K562 (cell line): ENCODE measurements at regions of chr9 and their contacts with region 1.

Region 1: GRCh38 chr9:92276331-92277032 is 17.0 kb downstream of the IARS1 start:
- DNase-seq: no peak
- ATAC-seq: no peak
- H3K4me3 ChIP-seq: no peak overlapping the region
- H3K27ac ChIP-seq: no peak overlapping the region
- H3K4me1 ChIP-seq: no peaks in the 10 kb centered on the region
- H3K27me3 ChIP-seq: no peaks in the 10 kb centered on the region
- CTCF ChIP-seq: no peak
- EP300 ChIP-seq: no peak
- POLR2A ChIP-seq: 0 out of 2 replicates have a peak, but pooled peaks have one; percentile 28
- RAD21 ChIP-seq: no peak

Region 2: DNA sequence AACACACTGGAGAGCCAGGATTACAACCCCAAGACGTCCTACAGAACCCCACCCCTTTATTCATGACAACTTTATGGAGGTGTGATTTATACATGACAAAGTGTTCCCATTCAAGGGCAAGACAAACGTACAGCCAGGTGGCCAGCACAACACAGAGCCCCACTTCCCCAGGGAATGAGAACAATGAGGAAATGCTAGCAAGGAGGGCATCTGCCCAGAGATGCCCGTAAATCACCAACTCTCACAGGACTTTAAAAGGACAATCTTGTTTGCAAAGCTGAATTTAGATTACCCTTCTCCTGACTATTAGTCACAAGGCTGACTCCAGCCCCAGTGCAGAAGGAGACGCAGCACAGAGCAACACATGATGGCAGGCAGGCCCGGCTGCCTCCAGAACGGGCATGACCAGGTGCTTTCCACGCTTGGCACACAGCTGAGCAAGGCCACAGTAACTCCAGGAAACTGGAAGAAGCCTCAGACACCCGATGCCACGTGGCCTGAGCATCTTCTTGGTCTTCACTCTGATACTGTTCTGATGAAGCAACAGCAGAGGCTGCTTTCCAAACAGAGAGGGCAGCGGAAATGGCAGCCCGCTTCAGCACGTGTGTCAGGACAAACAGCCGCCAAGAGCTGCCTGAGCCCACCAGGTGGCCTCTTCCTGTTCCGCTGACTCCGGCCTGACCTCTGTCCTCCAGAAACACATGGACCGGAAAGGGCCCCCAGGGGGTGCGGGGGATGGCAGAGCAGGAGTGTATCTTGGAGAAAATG is 377.8 kb before region 1 on chr9:
- CTCF ChIA-PET with region 1: no interaction called
- POLR2A ChIA-PET with region 1: no interaction called
- in situ Hi-C with region 1: no loop called
- intact Hi-C with region 1: no loop called
- DNase-seq: peak; percentile 74 to 91 (median 78)
- ATAC-seq: peak; percentile 58
- H3K4me3 ChIP-seq: no peak overlapping the region; the same call in 1 of the 2 replicates
- H3K27ac ChIP-seq: peak overlapping the region; percentile 88
- H3K4me1 ChIP-seq: peaks cover 64 to 76% of the 10 kb centered on the region in 2 experiments
- H3K27me3 ChIP-seq: no peaks in the 10 kb centered on the region
- CTCF ChIP-seq: peak; percentile 8 to 29 (median 28); a peak in 2 of 6 replicates
- EP300 ChIP-seq: peak; percentile 89; the same call in 1 of the 2 replicates
- POLR2A ChIP-seq: no peak; the same call in 1 of the 2 replicates
- RAD21 ChIP-seq: peak in 1 of 2 experiments; percentile 46; a peak in 3 of 4 replicates

Region 3: GRCh38 chr9:92245005-92245797 is 31.3 kb before region 1 on chr9:
- CTCF ChIA-PET with region 1: no interaction called
- POLR2A ChIA-PET with region 1: interaction called, 3 read pairs
- in situ Hi-C with region 1: no loop called
- intact Hi-C with region 1: loop called (anchors 5 kb)
- DNase-seq: no peak
- ATAC-seq: peak; percentile 7; the same call in 1 of the 3 replicates
- H3K4me3 ChIP-seq: no peak overlapping the region
- H3K27ac ChIP-seq: no peak overlapping the region
- H3K4me1 ChIP-seq: no peaks in the 10 kb centered on the region
- H3K27me3 ChIP-seq: no peaks in the 10 kb centered on the region
- CTCF ChIP-seq: no peak
- EP300 ChIP-seq: no peak
- POLR2A ChIP-seq: 0 out of 2 replicates have a peak, but pooled peaks have one; percentile 29
- RAD21 ChIP-seq: no peak

Region 4: DNA sequence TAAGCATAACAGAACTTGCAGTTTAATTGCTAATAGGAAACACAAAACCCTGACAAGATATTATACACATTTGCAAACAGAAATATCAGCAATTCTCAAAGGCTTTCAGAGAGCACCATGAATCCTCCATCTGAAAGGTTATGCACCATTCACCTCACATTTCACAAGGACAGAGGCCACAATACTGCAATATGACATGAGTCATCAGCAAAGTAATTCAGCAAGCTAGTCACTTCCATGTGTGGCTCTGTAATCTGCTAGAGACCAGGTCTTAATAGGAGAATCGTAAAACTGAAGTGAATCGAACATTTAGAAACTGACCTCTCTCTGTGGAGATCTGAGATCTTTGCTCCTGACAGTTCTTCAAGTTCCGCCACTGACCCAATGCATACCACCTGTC is 11.3 kb before region 1 on chr9:
- CTCF ChIA-PET with region 1: no interaction called
- POLR2A ChIA-PET with region 1: interaction called, 51 read pairs
- in situ Hi-C with region 1: no loop called
- intact Hi-C with region 1: no loop called
- DNase-seq: no peak
- ATAC-seq: no peak; the same call in 2 of the 3 replicates
- H3K4me3 ChIP-seq: no peak overlapping the region
- H3K27ac ChIP-seq: no peak overlapping the region
- H3K4me1 ChIP-seq: no peaks in the 10 kb centered on the region
- H3K27me3 ChIP-seq: no peaks in the 10 kb centered on the region
- CTCF ChIP-seq: no peak
- EP300 ChIP-seq: no peak
- POLR2A ChIP-seq: no peak
- RAD21 ChIP-seq: no peak

Region 5: DNA sequence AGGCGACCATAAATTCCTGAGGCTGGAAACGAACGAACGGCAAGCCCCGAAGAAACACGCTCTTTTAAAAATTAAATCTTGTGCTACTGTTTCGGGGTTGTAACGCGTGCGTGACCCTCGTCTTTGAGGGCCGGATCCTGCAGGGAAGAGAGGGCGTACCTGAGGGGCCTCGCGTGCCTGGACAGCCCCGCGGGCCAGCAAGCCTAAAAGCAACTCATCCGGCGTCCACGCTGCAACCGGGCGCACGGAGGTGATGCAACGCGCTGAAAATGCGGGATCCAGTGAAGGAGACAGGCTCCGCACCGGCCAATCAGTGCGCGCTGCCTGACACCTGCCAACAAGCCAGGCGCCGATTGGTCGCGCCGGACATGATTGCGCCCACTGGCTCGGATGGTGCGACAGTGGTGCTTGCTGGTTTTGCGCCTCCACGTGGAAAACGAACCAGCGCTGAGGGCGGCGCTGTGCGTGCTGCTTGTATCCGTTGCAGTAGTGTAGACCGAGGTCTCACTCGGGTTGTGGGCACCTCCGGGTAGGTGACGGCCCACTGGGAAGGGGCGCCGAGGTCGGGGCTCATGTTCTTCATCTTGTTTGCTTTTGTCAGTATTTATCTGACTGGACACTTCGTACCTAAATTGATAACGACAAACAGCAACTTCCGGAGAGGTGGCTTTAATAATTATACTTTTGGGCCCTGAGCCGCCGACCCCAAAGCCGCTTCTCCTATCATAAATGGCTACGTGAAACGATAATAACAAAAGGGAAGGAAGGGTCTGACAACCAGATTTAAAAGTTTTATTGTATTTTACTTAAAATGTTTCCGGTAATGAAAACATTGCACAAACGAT is 17.2 kb after region 1 on chr9 and contains the start of gene IARS1:
- CTCF ChIA-PET with region 1: no interaction called
- POLR2A ChIA-PET with region 1: interaction called, 58 read pairs
- in situ Hi-C with region 1: no loop called
- intact Hi-C with region 1: no loop called
- DNase-seq: peak; percentile 99
- ATAC-seq: peak; percentile 87
- H3K4me3 ChIP-seq: peak within 1 kb of the TSS; percentile 70
- H3K27ac ChIP-seq: peak within 1 kb of the TSS; percentile 97
- H3K4me1 ChIP-seq: peaks cover 7 to 23% of the 10 kb centered on the region in 2 experiments
- H3K27me3 ChIP-seq: no peaks in the 10 kb centered on the region
- CTCF ChIP-seq: peak; percentile 53 to 60 (median 55)
- EP300 ChIP-seq: peak; percentile 72
- POLR2A ChIP-seq: peak; percentile 94
- RAD21 ChIP-seq: peak in 1 of 2 experiments; percentile 25; a peak in 2 of 4 replicates
- polyA plus RNA-seq, gene IARS1: 119 to 224 TPM

Region 6: GRCh38 chr9:92600462-92601261 is 324.2 kb after region 1 on chr9:
- CTCF ChIA-PET with region 1: no interaction called
- POLR2A ChIA-PET with region 1: no interaction called
- in situ Hi-C with region 1: no loop called
- intact Hi-C with region 1: no loop called
- DNase-seq: no peak
- ATAC-seq: no peak
- H3K4me3 ChIP-seq: no peak overlapping the region
- H3K27ac ChIP-seq: no peak overlapping the region
- H3K4me1 ChIP-seq: no peaks in the 10 kb centered on the region
- H3K27me3 ChIP-seq: no peaks in the 10 kb centered on the region
- CTCF ChIP-seq: no peak
- EP300 ChIP-seq: no peak
- POLR2A ChIP-seq: no peak
- RAD21 ChIP-seq: no peak